ENCODE measurements at regions of chr11 and their contacts with region 1.

Region 1: GRCh38 chr11:102410382-102410784 is 42.2 kb downstream of the TMEM123 start:
- DNase-seq: peak in 1 of 2 experiments; percentile 33
- H3K4me3 ChIP-seq: no peak overlapping the region
- H3K4me3 Mint-ChIP-seq: no peak overlapping the region
- H3K27ac Mint-ChIP-seq: no peak overlapping the region
- H3K4me1 ChIP-seq: peaks cover 5% of the 10 kb centered on the region
- H3K4me1 Mint-ChIP-seq: peaks cover 47% of the 10 kb centered on the region
- H3K27me3 ChIP-seq: no peaks in the 10 kb centered on the region
- H3K27me3 Mint-ChIP-seq: no peaks in the 10 kb centered on the region
- CTCF ChIP-seq: no peak

Region 2: GRCh38 chr11:102430158-102430836 is 19.9 kb after region 1 on chr11:
- CTCF ChIA-PET with region 1: interaction called, 3 read pairs
- POLR2A ChIA-PET with region 1: no interaction called
- intact Hi-C with region 1: loop called (anchors 2 kb)
- DNase-seq: no peak
- H3K4me3 ChIP-seq: no peak overlapping the region
- H3K4me3 Mint-ChIP-seq: no peak overlapping the region
- H3K27ac Mint-ChIP-seq: peak overlapping the region; percentile 28
- H3K4me1 ChIP-seq: peaks cover 41% of the 10 kb centered on the region
- H3K4me1 Mint-ChIP-seq: peaks cover 40% of the 10 kb centered on the region
- H3K27me3 ChIP-seq: no peaks in the 10 kb centered on the region
- H3K27me3 Mint-ChIP-seq: no peaks in the 10 kb centered on the region
- CTCF ChIP-seq: no peak

Measured in Caco-2 (cell line).